HCT116 (cell line): ENCODE measurements at regions of chr5 and their contacts with region 1.

Region 1: GRCh38 chr5:178551059-178551458 is 39.1 kb downstream of the COL23A1 start:
- DNase-seq: peak; percentile 12
- ATAC-seq: peak; percentile 34; the same call in 1 of the 2 replicates
- H3K4me3 ChIP-seq: no peak overlapping the region
- H3K27ac ChIP-seq: no peak overlapping the region
- H3K4me1 ChIP-seq: no peaks in the 10 kb centered on the region
- H3K27me3 ChIP-seq: no peaks in the 10 kb centered on the region
- CTCF ChIP-seq: peak; percentile 43 to 54 (median 46); a peak in 4 of 6 replicates
- POLR2A ChIP-seq: no peak
- RAD21 ChIP-seq: peak; percentile 56

Region 2: DNA sequence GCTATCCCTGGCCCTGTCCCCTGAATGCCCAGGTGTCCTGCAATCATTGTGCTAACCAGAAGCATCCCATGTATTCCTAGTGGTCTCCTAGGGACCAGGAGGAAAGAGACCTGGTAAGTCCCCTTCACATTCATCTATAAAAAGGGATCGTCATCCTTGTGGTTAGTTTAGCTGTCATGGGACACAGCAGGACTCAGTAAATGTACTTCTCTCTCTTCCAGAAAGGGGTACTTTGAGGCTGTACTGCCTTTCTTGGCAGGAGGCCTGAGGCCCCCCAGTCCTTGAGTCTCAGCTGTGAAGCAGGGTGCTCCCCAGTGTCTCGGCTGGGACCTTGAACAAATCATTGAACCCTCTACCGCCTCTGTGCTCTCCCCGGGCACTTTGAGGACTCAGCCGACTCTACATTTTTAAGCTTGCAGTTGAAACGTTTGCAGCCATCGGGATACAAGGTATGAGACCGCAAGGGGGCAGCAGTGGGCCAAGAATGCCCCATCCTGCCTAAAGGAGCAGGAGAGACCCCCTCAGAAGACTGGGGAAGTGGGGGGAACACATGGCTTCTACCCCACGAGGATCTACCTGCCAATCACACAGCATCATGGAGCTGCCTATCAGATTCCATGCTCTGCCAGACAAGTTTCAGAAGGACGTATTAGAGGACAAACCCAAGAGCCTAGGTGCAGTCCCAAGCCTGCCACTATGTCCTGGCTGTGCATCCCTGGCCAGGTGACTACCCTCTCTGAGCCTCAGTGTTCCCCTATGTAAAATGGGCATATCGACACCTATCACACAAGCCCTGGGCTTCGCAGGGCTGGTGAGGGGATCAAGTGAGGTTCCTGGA is 316.1 kb before region 1 on chr5:
- CTCF ChIA-PET with region 1: no interaction called
- POLR2A ChIA-PET with region 1: no interaction called
- RAD21 ChIA-PET with region 1: no interaction called
- intact Hi-C with region 1: loop called (anchors 5 kb)
- DNase-seq: peak; percentile 70
- ATAC-seq: peak; percentile 51
- H3K4me3 ChIP-seq: no peak overlapping the region
- H3K27ac ChIP-seq: no peak overlapping the region
- H3K4me1 ChIP-seq: peaks cover 13 to 31% of the 10 kb centered on the region in 2 experiments
- H3K27me3 ChIP-seq: no peaks in the 10 kb centered on the region
- CTCF ChIP-seq: peak in 2 of 3 experiments; percentile 84 to 90; a peak in 4 of 6 replicates
- POLR2A ChIP-seq: no peak
- RAD21 ChIP-seq: no peak

Region 3: DNA sequence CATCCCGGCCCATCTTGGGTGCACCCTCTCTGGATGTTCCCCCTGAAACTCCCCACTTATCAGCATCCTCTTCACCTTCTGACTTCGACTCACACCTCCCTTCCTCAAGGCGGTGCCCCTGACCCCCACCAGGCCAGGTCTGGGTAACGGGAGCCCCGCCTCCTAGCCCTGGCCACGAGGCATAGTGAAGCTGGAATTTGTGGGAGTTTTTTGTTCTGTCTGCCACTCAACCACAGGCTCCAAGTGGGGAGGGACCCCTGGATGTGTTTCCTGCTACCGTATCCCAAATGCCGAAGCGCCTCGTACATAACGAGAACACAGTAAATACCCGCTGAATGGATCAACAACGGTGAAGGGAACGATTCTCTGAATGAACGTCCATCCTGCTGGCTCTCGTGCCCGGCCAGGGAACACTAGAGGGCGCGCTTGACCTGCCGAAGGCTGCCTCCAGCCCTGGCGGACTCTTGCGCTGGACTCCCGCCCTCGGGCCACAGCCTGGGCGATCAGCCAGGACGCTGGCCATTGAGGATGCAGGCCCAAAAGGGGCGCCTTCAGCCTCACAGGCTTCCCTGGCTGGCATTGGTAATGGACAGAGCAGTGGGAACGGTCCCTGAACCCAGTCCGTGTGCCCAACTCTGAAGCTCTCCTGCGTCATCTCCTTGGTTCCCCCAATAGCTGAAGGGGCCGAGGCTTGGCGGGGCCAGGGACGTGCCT is 271.2 kb before region 1 on chr5:
- CTCF ChIA-PET with region 1: interaction called, 11 read pairs
- POLR2A ChIA-PET with region 1: no interaction called
- RAD21 ChIA-PET with region 1: interaction called in 1 of 2 experiments, 3 read pairs
- intact Hi-C with region 1: loop called (anchors 1 kb)
- DNase-seq: peak; percentile 49
- ATAC-seq: peak; percentile 97
- H3K4me3 ChIP-seq: no peak overlapping the region
- H3K27ac ChIP-seq: no peak overlapping the region
- H3K4me1 ChIP-seq: peaks cover 0 to 4% of the 10 kb centered on the region in 2 experiments; a peak in 2 of 4 replicates
- H3K27me3 ChIP-seq: no peaks in the 10 kb centered on the region
- CTCF ChIP-seq: peak; percentile 87 to 97 (median 95)
- POLR2A ChIP-seq: no peak
- RAD21 ChIP-seq: peak; percentile 98

Region 4: GRCh38 chr5:178461004-178461730 is 89.9 kb before region 1 on chr5:
- CTCF ChIA-PET with region 1: interaction called, 11 read pairs
- POLR2A ChIA-PET with region 1: no interaction called
- RAD21 ChIA-PET with region 1: no interaction called
- intact Hi-C with region 1: loop called (anchors 2 kb)
- DNase-seq: peak; percentile 54
- ATAC-seq: peak; percentile 100
- H3K4me3 ChIP-seq: no peak overlapping the region
- H3K27ac ChIP-seq: no peak overlapping the region
- H3K4me1 ChIP-seq: peaks cover 0 to 3% of the 10 kb centered on the region in 2 experiments; a peak in 1 of 4 replicates
- H3K27me3 ChIP-seq: no peaks in the 10 kb centered on the region
- CTCF ChIP-seq: peak; percentile 49 to 94 (median 86); a peak in 5 of 6 replicates
- POLR2A ChIP-seq: no peak
- RAD21 ChIP-seq: peak; percentile 64

Region 5: GRCh38 chr5:178808886-178809285 is 257.8 kb after region 1 on chr5:
- CTCF ChIA-PET with region 1: no interaction called
- POLR2A ChIA-PET with region 1: no interaction called
- RAD21 ChIA-PET with region 1: no interaction called
- intact Hi-C with region 1: no loop called
- DNase-seq: no peak
- ATAC-seq: no peak
- H3K4me3 ChIP-seq: no peak overlapping the region
- H3K27ac ChIP-seq: no peak overlapping the region
- H3K4me1 ChIP-seq: no peaks in the 10 kb centered on the region
- H3K27me3 ChIP-seq: no peaks in the 10 kb centered on the region
- CTCF ChIP-seq: no peak
- POLR2A ChIP-seq: no peak
- RAD21 ChIP-seq: no peak